Ascending aorta (tissue), 2 donors: ENCODE measurements at regions of chr5 and their contacts with region 1.

Region 1: DNA sequence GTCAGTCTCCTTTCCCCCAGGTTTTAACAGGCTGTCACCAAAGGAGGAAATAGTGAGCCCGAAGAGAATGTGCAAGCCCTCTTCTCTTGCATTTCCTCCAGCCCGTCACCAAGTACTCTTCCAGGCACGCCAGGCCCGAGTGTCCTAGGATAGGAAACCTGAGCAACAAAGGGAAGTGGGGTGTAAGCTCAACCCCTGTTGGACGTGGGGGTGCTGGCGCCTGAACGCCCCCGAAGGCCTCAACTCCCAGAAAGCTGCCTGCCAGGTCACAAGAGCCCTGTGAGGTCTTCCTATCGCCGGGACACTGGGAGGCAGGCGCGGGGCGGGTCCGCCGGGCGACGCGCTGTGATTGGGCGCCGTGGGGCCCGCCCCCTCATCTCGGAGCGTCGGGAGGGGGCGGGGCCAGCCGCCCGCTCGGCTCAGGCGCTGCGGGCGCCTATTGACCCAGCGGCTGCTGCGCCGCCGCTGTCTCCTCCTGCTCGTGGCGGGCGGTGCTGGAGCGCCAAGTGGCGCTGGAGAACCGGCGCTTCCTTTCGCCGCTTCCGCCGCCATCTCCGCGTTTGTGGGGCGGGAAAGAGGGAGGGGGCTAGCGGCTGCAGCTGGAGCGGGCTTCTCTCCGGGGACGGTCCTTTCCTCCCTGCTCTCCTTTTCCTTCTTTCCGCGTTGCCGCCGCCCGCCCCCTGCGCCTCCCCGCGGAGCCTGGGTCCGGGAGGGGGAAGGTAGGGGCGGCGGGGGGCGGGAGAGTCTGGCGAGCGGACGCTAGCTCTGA is 572 bp upstream of the MAN2A1 start:
- DNase-seq: peak; percentile 33 to 92
- H3K4me3 ChIP-seq: peak overlapping the region; percentile 87 to 98
- H3K27ac ChIP-seq: peak overlapping the region; percentile 99 to 100
- H3K4me1 ChIP-seq: peaks cover 6 to 15% of the 10 kb centered on the region in 2 donors
- H3K27me3 ChIP-seq: no peaks in the 10 kb centered on the region
- CTCF ChIP-seq: peak in 1 of 3 experiments; percentile 9

Region 2: DNA sequence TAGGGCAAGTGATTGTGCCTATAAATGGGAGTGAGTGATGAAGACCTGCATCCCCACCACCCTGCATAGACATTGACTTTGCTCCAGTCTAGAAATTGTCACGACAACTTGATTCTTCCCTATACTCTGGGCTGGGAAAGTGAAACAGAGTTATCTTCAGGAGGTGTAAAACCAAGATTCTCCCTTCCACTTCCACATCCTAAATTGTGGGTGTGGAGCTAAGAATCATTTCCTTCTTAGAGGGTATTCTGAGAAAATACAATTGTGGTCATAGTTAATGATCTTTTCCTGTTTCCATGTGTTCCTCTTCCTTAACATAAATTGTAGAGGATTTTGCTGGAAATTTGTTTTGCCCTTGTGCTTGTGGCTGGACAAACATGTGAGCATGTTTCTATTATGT is 182.6 kb before region 1 on chr5:
- intact Hi-C with region 1: no loop called
- DNase-seq: no peak
- H3K4me3 ChIP-seq: no peak overlapping the region
- H3K27ac ChIP-seq: no peak overlapping the region
- H3K4me1 ChIP-seq: no peaks in the 10 kb centered on the region
- H3K27me3 ChIP-seq: no peaks in the 10 kb centered on the region
- CTCF ChIP-seq: no peak

Region 3: GRCh38 chr5:109630093-109630492 is 59.1 kb before region 1 on chr5:
- intact Hi-C with region 1: no loop called
- DNase-seq: no peak
- H3K4me3 ChIP-seq: no peak overlapping the region
- H3K27ac ChIP-seq: no peak overlapping the region
- H3K4me1 ChIP-seq: no peaks in the 10 kb centered on the region
- H3K27me3 ChIP-seq: no peaks in the 10 kb centered on the region
- CTCF ChIP-seq: no peak

Region 4: DNA sequence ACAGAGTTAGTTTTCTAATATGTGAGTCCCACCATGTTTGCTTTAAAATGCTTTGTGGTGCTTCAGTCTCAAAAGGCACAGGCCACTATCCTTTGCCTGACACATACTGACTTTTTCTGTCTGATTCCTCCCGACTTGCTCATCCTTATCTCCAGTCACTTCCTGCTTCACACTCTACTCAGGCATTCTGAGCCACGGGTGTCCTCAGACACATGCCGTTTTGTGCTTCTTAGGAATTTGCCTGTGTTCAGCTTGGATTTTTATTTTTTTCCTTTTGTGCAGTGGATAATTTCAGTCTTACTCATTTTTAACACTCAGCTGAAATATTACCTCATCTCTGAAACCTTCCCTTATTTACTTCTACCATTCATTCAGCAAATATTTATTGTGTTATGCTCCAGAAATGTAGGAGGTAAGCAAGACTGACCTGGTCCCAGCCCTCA is 54.6 kb after region 1 on chr5:
- intact Hi-C with region 1: loop called (anchors 2 kb)
- DNase-seq: peak in 1 of 2 donors; percentile 61
- H3K4me3 ChIP-seq: no peak overlapping the region
- H3K27ac ChIP-seq: peak overlapping the region; percentile 36 to 48
- H3K4me1 ChIP-seq: peaks cover 10 to 36% of the 10 kb centered on the region in 2 donors
- H3K27me3 ChIP-seq: no peaks in the 10 kb centered on the region
- CTCF ChIP-seq: no peak

Region 5: GRCh38 chr5:109900911-109901627 is 211.9 kb after region 1 on chr5:
- intact Hi-C with region 1: loop called (anchors 5 kb)
- DNase-seq: no peak
- H3K4me3 ChIP-seq: no peak overlapping the region
- H3K27ac ChIP-seq: no peak overlapping the region
- H3K4me1 ChIP-seq: peaks cover 0 to 4% of the 10 kb centered on the region in 2 donors
- H3K27me3 ChIP-seq: no peaks in the 10 kb centered on the region
- CTCF ChIP-seq: no peak

Region 6: DNA sequence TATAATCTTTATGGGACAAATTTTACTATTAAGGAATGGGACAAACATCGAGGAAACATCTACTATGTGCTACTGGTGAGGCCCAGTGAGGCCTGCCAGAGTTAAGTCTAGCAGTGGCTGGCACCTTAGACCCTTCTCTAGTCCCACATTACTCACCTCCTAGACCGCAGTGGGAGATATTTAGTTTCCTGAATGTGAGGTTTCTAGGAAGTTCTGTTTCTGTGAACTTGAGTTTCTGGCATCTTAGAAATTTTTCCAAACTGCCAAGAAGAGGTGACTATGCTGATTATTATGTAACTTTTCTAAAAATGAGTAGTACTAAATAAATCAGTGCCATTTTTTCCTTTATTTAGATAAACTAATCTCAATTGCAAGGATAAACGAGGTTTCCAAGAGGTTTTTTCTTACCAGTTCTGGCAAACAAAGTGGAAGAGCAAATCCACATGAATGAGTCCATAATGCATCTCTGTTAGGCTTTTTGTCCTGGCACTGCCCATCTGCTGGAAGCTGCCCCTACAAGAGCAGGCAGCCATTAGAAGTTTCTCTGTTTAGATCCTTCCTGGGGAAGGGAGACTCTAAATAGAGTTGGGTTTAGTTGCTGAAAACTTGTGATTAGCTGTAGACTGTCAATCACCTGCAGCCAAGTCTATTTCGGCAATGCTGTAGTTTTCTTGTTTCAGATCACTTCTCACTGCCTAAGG is 349.3 kb after region 1 on chr5:
- intact Hi-C with region 1: loop called (anchors 5 kb)
- DNase-seq: peak; percentile 16 to 73
- H3K4me3 ChIP-seq: no peak overlapping the region
- H3K27ac ChIP-seq: peak overlapping the region; percentile 45 to 62
- H3K4me1 ChIP-seq: peaks cover 0 to 5% of the 10 kb centered on the region in 2 donors
- H3K27me3 ChIP-seq: no peaks in the 10 kb centered on the region
- CTCF ChIP-seq: no peak

Region 7: DNA sequence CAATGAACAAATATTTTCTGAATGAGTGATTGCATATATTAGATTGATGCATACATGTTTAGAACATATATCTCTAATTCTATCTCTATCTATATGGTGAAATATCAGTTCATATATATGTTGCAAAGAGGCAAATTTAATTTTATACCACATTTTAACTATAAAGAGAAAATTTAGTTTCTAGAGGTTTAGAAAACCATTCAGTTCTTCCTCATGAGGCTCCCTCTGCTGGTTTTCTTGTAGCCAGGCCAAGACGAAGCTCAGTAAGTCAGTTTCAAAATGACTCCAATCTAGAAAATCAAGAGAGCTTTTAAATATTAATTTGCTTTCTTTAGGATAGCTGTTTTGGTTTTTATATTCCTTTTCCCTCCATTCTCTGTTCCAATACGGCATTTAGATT is 725.2 kb after region 1 on chr5:
- intact Hi-C with region 1: loop called (anchors 5 kb)
- DNase-seq: no peak
- H3K4me3 ChIP-seq: no peak overlapping the region
- H3K27ac ChIP-seq: no peak overlapping the region
- H3K4me1 ChIP-seq: no peaks in the 10 kb centered on the region
- H3K27me3 ChIP-seq: no peaks in the 10 kb centered on the region
- CTCF ChIP-seq: peak in 1 of 3 experiments; percentile 49

Region 8: DNA sequence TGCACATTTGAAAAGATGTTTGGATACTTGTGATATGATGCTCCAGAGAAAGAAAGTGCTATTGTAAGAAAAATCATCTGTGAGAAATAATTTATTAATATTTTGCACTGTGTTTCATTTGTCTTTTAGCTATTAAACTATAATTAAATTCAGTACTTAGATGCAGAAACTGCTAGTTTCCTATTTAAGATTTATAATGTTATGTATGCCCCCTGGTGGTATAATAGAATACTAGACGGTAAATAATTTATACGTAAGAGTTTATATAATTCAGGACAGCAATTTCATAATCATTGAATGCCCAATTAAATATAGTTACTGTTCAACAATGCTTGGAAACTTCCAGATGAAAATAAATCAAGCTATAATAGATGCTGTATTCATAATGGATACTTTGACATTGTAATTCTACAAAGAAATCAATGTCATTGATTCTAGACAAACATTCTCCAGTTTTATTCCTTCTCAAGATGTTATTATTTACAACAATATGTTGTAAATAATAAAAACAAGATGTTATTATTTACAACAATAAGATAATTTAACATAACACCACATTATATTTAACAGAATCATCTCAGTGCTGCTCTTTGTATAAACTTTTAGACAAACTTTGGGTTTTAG is 936.3 kb after region 1 on chr5:
- intact Hi-C with region 1: loop called (anchors 2 kb)
- DNase-seq: no peak
- H3K4me3 ChIP-seq: no peak overlapping the region
- H3K27ac ChIP-seq: no peak overlapping the region
- H3K4me1 ChIP-seq: no peaks in the 10 kb centered on the region
- H3K27me3 ChIP-seq: no peaks in the 10 kb centered on the region
- CTCF ChIP-seq: peak; percentile 30 to 51 (median 38)